PC-9 (cell line): ENCODE measurements at regions of chr4 and their contacts with region 1.

Region 1: GRCh38 chr4:109702950-109703663 is at the start of gene CASP6:
- DNase-seq: peak; percentile 49 to 79
- H3K4me3 ChIP-seq: peak within 1 kb of the TSS; percentile 63
- H3K27ac ChIP-seq: peak within 1 kb of the TSS; percentile 44
- H3K4me1 ChIP-seq: peaks cover 9% of the 10 kb centered on the region; the same call in 1 of the 2 replicates
- H3K27me3 ChIP-seq: no peaks in the 10 kb centered on the region
- CTCF ChIP-seq: peak; percentile 63
- total RNA-seq, gene CASP6: 22.3 and 22.4 TPM in 2 replicates

Region 2: DNA sequence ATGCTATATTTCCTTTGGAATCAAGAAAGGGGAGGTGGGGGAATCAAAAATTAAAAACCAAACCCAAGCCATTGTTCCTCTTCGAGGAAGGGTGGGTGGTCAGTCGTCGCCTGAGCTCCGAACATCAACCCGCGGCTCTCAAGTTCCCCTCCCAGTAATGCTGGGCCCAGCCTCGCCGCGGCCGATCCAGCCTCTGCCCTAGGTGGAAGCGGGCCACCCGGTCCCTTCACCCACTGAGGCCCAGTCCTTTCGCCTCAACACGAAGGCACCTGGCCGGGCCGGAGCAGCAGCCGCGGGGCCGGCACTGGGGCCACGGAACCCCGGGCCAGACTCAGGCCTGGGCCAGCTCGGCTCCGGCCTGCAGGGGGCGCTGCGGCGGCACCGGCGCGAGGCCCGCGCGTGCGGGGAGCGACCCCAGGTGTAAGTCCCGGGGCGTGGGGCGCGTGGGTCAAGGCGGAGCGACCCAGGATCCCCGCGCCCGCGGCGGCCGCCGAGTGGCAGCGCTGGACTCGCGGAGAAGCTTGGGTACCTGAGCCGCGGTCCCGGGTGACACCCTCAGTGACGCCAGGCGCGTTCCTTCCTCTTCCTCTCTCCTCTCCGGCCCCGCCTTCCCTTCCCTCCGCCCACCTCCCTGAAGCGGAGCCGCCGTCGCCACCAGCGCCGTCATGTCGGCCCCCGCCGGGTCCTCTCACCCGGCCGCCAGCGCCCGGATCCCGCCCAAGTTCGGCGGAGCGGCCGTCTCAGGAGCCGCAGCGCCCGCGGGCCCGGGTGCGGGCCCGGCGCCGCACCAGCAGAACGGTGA is 269.7 kb before region 1 on chr4 and contains the start of gene SEC24B:
- CTCF ChIA-PET with region 1: no interaction called
- POLR2A ChIA-PET with region 1: no interaction called
- intact Hi-C with region 1: loop called (anchors 2 kb)
- DNase-seq: peak; percentile 57 to 75
- H3K4me3 ChIP-seq: peak within 1 kb of the TSS; percentile 79
- H3K27ac ChIP-seq: peak within 1 kb of the TSS; percentile 25
- H3K4me1 ChIP-seq: peaks cover 21% of the 10 kb centered on the region
- H3K27me3 ChIP-seq: no peaks in the 10 kb centered on the region
- CTCF ChIP-seq: peak; percentile 62
- total RNA-seq, gene SEC24B: 14.3 and 21.7 TPM in 2 replicates

Region 3: GRCh38 chr4:109559983-109560686 is 143.0 kb before region 1 on chr4 and contains the start of gene MCUB:
- CTCF ChIA-PET with region 1: no interaction called
- POLR2A ChIA-PET with region 1: interaction called, 4 read pairs
- intact Hi-C with region 1: loop called (anchors 1 kb)
- DNase-seq: peak; percentile 70 to 79
- H3K4me3 ChIP-seq: peak within 1 kb of the TSS; percentile 71
- H3K27ac ChIP-seq: peak within 1 kb of the TSS; percentile 26; the same call in 1 of the 2 replicates
- H3K4me1 ChIP-seq: peaks cover 8% of the 10 kb centered on the region
- H3K27me3 ChIP-seq: no peaks in the 10 kb centered on the region
- CTCF ChIP-seq: no peak
- total RNA-seq, gene MCUB: 15.4 and 17.0 TPM in 2 replicates

Region 4: GRCh38 chr4:109803924-109804571 is 100.9 kb after region 1 on chr4:
- CTCF ChIA-PET with region 1: interaction called, 3 read pairs
- POLR2A ChIA-PET with region 1: no interaction called
- intact Hi-C with region 1: loop called (anchors 1 kb)
- DNase-seq: peak; percentile 24 to 42
- H3K4me3 ChIP-seq: no peak overlapping the region
- H3K27ac ChIP-seq: no peak overlapping the region
- H3K4me1 ChIP-seq: no peaks in the 10 kb centered on the region
- H3K27me3 ChIP-seq: no peaks in the 10 kb centered on the region
- CTCF ChIP-seq: peak; percentile 56

Region 5: DNA sequence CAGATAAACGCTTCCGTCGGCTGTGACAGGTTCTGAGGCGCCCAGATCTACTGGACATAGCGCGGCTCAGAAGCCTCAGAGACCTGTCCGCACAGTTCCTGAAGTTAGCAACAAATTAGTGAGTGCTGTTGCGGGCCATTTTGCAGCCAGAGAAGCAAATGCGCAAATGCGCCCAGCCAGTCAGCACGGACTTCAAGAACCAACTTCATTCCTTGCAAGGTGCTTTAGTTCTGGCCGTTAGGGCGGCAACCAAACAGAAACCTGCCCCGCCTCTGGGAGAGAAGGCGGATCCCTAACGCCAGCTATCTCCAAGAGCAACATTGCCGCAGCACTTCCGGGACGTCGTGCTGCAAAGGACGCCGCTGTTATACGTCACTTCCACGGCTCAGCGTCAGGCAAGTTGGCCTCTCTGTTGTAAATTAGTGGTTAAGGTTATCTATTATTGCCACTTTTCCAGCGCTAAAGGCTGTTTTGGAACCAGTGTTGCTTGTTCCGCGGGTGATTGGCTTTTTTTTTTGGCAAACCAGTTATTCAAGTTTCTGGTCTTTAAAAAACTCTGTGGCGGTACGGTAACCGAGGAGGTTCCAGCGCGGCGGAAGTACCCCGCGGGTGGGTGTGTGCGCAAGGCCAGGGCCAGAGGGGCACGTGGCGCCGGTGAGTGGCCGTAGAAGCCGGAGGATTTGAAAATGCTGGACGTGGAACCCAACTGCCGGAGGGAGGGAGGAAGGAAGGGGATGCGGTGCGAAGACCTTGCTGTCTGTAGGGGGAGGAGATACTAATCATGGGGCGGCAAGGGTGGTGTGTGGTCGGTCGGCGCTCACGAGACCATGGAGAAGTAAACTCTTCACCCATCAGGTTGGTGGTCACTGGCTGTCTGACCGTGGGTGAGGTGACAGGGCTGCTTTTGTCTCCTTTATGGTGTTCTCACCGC is 112.3 kb after region 1 on chr4 and contains the start of gene GAR1:
- CTCF ChIA-PET with region 1: no interaction called
- POLR2A ChIA-PET with region 1: no interaction called
- intact Hi-C with region 1: loop called (anchors 5 kb)
- DNase-seq: peak; percentile 80 to 91
- H3K4me3 ChIP-seq: peak within 1 kb of the TSS; percentile 90
- H3K27ac ChIP-seq: peak within 1 kb of the TSS; percentile 86
- H3K4me1 ChIP-seq: peaks cover 20% of the 10 kb centered on the region
- H3K27me3 ChIP-seq: no peaks in the 10 kb centered on the region
- CTCF ChIP-seq: no peak
- total RNA-seq, gene GAR1: 12.1 and 16.0 TPM in 2 replicates

Region 6: DNA sequence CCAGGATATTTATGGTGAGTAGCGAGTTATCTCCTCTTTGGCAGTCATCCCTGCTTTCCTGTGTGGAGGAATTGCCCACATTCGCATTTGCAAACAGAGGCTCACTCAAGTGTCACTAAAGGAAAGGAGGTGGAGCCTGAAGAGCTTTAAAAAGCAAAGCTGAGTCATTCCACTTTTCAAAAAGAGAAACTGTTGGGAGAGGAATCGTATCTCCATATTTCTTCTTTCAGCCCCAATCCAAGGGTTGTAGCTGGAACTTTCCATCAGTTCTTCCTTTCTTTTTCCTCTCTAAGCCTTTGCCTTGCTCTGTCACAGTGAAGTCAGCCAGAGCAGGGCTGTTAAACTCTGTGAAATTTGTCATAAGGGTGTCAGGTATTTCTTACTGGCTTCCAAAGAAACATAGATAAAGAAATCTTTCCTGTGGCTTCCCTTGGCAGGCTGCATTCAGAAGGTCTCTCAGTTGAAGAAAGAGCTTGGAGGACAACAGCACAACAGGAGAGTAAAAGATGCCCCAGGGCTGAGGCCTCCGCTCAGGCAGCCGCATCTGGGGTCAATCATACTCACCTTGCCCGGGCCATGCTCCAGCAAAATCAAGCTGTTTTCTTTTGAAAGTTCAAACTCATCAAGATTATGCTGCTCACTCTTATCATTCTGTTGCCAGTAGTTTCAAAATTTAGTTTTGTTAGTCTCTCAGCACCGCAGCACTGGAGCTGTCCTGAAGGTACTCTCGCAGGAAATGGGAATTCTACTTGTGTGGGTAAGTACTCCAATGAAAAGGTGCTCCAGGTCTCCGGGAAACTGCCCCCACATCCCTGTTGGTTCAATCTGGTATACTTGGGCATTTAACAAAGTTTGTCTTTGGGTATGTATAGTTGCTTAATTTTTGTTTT is 209.8 kb after region 1 on chr4 and contains the start of gene EGF:
- CTCF ChIA-PET with region 1: no interaction called
- POLR2A ChIA-PET with region 1: no interaction called
- intact Hi-C with region 1: loop called (anchors 10 kb)
- DNase-seq: no peak
- H3K4me3 ChIP-seq: peak within 1 kb of the TSS; percentile 45; the same call in 1 of the 2 replicates
- H3K27ac ChIP-seq: peak within 1 kb of the TSS; percentile 58; the same call in 1 of the 2 replicates
- H3K4me1 ChIP-seq: peaks cover 9% of the 10 kb centered on the region; the same call in 1 of the 2 replicates
- H3K27me3 ChIP-seq: no peaks in the 10 kb centered on the region
- CTCF ChIP-seq: no peak
- total RNA-seq, gene EGF: 19.6 and 20.4 TPM in 2 replicates

Region 7: GRCh38 chr4:109977854-109978501 is 274.9 kb after region 1 on chr4:
- CTCF ChIA-PET with region 1: no interaction called
- POLR2A ChIA-PET with region 1: no interaction called
- intact Hi-C with region 1: loop called (anchors 10 kb)
- DNase-seq: peak in 1 of 2 experiments; percentile 49
- H3K4me3 ChIP-seq: no peak overlapping the region
- H3K27ac ChIP-seq: no peak overlapping the region
- H3K4me1 ChIP-seq: no peaks in the 10 kb centered on the region
- H3K27me3 ChIP-seq: no peaks in the 10 kb centered on the region
- CTCF ChIP-seq: peak; percentile 75